ENCODE measurements at regions of chr2 and their contacts with region 1.

Region 1: GRCh38 chr2:189440947-189441708 is at the start of gene WDR75:
- DNase-seq: peak; percentile 73 to 96 (median 94)
- ATAC-seq: peak; percentile 97
- H3K4me3 ChIP-seq: peak within 1 kb of the TSS; percentile 83
- H3K4me3 Mint-ChIP-seq: peak within 1 kb of the TSS in 6 of 10 donors; percentile 99 to 100 (median 100)
- H3K27ac ChIP-seq: peak within 1 kb of the TSS; percentile 92
- H3K27ac Mint-ChIP-seq: peak within 1 kb of the TSS in 8 of 9 donors; percentile 97 to 100 (median 100)
- H3K4me1 ChIP-seq: peaks cover 10 to 14% of the 10 kb centered on the region in 2 donors
- H3K4me1 Mint-ChIP-seq: peaks cover 3 to 13% (median 8%) of the 10 kb centered on the region in 7 donors
- H3K27me3 ChIP-seq: no peaks in the 10 kb centered on the region
- H3K27me3 Mint-ChIP-seq: peaks cover 0 to 10% (median 0%) of the 10 kb centered on the region in 5 donors
- total RNA-seq, gene WDR75: 39.9 to 67.4 (median 60.7) TPM

Region 2: GRCh38 chr2:189109921-189110397 is 331.2 kb before region 1 on chr2:
- CTCF ChIA-PET with region 1: no interaction called
- POLR2A ChIA-PET with region 1: no interaction called
- intact Hi-C with region 1: no loop called
- DNase-seq: no peak
- ATAC-seq: no peak
- H3K4me3 ChIP-seq: no peak overlapping the region
- H3K4me3 Mint-ChIP-seq: no peak overlapping the region
- H3K27ac ChIP-seq: no peak overlapping the region
- H3K27ac Mint-ChIP-seq: no peak overlapping the region
- H3K4me1 ChIP-seq: no peaks in the 10 kb centered on the region
- H3K4me1 Mint-ChIP-seq: peaks cover 0 to 8% (median 5%) of the 10 kb centered on the region in 7 donors
- H3K27me3 ChIP-seq: no peaks in the 10 kb centered on the region
- H3K27me3 Mint-ChIP-seq: no peaks in the 10 kb centered on the region

Region 3: DNA sequence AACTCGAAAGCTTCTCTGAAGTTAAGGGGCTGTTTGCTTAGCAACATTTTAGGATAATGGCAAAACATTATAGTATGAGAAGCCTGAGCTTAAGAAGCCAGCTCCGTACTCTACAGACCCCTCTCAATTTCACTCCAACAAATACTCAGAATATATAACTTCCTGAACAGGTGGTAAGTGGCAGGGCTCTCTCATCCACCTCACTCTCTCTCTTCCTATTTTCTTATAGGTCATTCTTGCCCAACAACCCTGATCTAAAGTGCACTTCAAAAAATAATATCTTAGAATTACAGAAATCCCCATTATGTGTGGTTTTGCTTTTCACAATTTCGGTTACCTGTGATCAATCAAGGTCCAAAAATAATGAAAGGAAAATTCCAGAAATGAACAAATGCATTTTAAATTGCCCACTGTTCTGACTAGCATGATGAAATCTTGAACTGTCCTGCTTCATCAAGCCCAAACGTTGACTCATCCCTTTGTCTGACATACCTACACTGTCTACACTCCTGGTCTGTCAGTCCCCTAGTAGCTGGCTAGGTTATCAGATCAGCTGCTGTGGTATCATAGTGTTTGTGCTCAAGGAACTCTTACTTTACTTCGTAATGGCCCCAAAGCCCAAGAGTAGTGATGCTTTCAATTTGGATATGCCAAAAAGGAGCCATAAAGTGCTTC is 138.7 kb before region 1 on chr2:
- CTCF ChIA-PET with region 1: no interaction called
- POLR2A ChIA-PET with region 1: no interaction called
- intact Hi-C with region 1: loop called (anchors 1 to 2 kb)
- DNase-seq: no peak
- ATAC-seq: no peak
- H3K4me3 ChIP-seq: no peak overlapping the region
- H3K4me3 Mint-ChIP-seq: peak overlapping the region in 8 of 10 donors; percentile 4 to 74 (median 60)
- H3K27ac ChIP-seq: no peak overlapping the region
- H3K27ac Mint-ChIP-seq: peak overlapping the region in 8 of 9 donors; percentile 25 to 95 (median 70)
- H3K4me1 ChIP-seq: peaks cover 56 to 88% of the 10 kb centered on the region in 2 donors
- H3K4me1 Mint-ChIP-seq: peaks cover 57 to 96% (median 91%) of the 10 kb centered on the region in 7 donors
- H3K27me3 ChIP-seq: no peaks in the 10 kb centered on the region
- H3K27me3 Mint-ChIP-seq: no peaks in the 10 kb centered on the region

Region 4: GRCh38 chr2:189580658-189581353 is 139.7 kb after region 1 on chr2 and contains the start of gene SLC40A1:
- CTCF ChIA-PET with region 1: no interaction called
- POLR2A ChIA-PET with region 1: interaction called, 17 read pairs
- intact Hi-C with region 1: loop called (anchors 1 kb)
- DNase-seq: peak; percentile 54 to 75 (median 66)
- ATAC-seq: peak; percentile 96
- H3K4me3 ChIP-seq: peak within 1 kb of the TSS; percentile 79
- H3K4me3 Mint-ChIP-seq: peak within 1 kb of the TSS; percentile 83 to 100 (median 93)
- H3K27ac ChIP-seq: peak within 1 kb of the TSS; percentile 80
- H3K27ac Mint-ChIP-seq: peak within 1 kb of the TSS; percentile 30 to 98 (median 87)
- H3K4me1 ChIP-seq: peaks cover 0 to 12% of the 10 kb centered on the region in 2 donors
- H3K4me1 Mint-ChIP-seq: peaks cover 24 to 63% (median 56%) of the 10 kb centered on the region in 7 donors
- H3K27me3 ChIP-seq: peaks cover 0 to 5% of the 10 kb centered on the region in 2 donors
- H3K27me3 Mint-ChIP-seq: peaks cover 0 to 47% (median 0%) of the 10 kb centered on the region in 5 donors
- total RNA-seq, gene SLC40A1: 4.2 to 38.0 (median 24.4) TPM

Region 5: DNA sequence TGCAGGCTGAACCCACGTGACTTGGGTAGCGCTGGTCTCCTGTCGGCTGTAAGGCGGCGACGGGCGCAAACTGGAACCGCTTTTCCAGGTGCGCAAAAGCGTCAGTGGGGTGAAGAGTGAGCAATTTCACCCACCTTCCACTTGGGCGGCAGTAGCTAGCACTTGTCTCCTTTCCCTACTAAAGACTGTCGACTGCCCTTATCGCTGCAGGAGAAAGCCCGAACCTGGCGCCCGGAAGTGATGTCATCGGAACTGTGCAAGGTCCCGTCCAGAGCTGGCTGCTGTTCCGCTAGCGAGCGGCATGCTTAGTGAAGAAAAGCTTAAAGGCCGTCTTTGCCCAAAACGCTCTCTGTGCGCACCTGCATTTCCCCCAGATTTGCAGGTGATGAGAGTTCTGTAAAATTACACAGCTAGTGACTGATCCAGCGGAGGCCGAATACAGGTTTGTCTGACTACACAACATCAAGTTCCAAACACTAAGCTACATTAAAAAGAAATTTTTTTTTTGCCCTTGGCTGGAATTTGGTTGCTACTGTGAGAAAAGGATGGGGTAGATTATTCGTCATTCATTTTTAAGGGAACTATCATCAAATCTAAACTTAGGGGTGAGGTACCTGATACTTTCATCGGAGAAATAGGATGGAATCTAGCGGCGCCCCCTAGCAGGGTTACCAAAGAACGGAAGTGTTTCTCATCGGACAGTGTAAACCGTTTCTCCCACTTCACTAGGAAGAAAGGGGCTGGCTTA is 321.6 kb after region 1 on chr2 and contains the start of gene OSGEPL1:
- CTCF ChIA-PET with region 1: no interaction called
- POLR2A ChIA-PET with region 1: interaction called, 8 read pairs
- intact Hi-C with region 1: loop called (anchors 1 kb)
- DNase-seq: peak; percentile 72 to 95 (median 88)
- ATAC-seq: peak; percentile 95
- H3K4me3 ChIP-seq: peak within 1 kb of the TSS; percentile 88
- H3K4me3 Mint-ChIP-seq: peak within 1 kb of the TSS; percentile 88 to 98 (median 94)
- H3K27ac ChIP-seq: peak within 1 kb of the TSS; percentile 89
- H3K27ac Mint-ChIP-seq: peak within 1 kb of the TSS; percentile 94 to 98 (median 96)
- H3K4me1 ChIP-seq: peaks cover 6 to 10% of the 10 kb centered on the region in 2 donors
- H3K4me1 Mint-ChIP-seq: peaks cover 4 to 18% (median 9%) of the 10 kb centered on the region in 7 donors
- H3K27me3 ChIP-seq: no peaks in the 10 kb centered on the region
- H3K27me3 Mint-ChIP-seq: no peaks in the 10 kb centered on the region
- total RNA-seq, gene OSGEPL1: 6.8 to 24.2 (median 7.2) TPM

Region 6: GRCh38 chr2:190069936-190070696 is 629.0 kb after region 1 on chr2:
- CTCF ChIA-PET with region 1: no interaction called
- POLR2A ChIA-PET with region 1: no interaction called
- intact Hi-C with region 1: loop called in 1 of 2 experiments (anchors 10 kb)
- DNase-seq: peak in 6 of 9 donors; percentile 20 to 50 (median 32)
- ATAC-seq: peak; percentile 64
- H3K4me3 ChIP-seq: no peak overlapping the region
- H3K4me3 Mint-ChIP-seq: no peak overlapping the region
- H3K27ac ChIP-seq: no peak overlapping the region
- H3K27ac Mint-ChIP-seq: no peak overlapping the region
- H3K4me1 ChIP-seq: no peaks in the 10 kb centered on the region
- H3K4me1 Mint-ChIP-seq: no peaks in the 10 kb centered on the region
- H3K27me3 ChIP-seq: no peaks in the 10 kb centered on the region
- H3K27me3 Mint-ChIP-seq: peaks cover 0 to 8% (median 0%) of the 10 kb centered on the region in 5 donors

Region 7: DNA sequence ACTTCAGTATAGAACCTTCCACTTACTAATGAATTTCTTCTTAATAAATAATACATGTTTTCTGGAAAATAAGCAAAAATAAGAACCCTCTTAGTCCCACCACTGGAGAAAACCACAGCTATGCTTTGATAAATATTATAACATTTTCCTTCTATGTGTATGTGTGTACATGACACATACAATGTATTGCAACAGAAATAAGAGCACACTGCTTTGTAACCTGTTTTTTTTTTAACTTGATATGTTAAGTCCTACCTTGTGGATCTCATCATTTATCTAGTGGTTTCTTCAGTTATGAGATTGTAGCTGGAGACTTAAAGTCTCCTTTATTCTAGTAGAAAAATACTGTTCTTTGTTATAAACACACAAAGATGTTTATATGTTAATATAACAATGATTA is 919.4 kb after region 1 on chr2:
- CTCF ChIA-PET with region 1: no interaction called
- POLR2A ChIA-PET with region 1: no interaction called
- intact Hi-C with region 1: loop called in 1 of 2 experiments (anchors 5 kb)
- DNase-seq: no peak
- ATAC-seq: no peak
- H3K4me3 ChIP-seq: peak overlapping the region; percentile 61
- H3K4me3 Mint-ChIP-seq: peak overlapping the region; percentile 56 to 99 (median 92)
- H3K27ac ChIP-seq: peak overlapping the region; percentile 71
- H3K27ac Mint-ChIP-seq: peak overlapping the region; percentile 42 to 97 (median 94)
- H3K4me1 ChIP-seq: peaks cover 0 to 3% of the 10 kb centered on the region in 2 donors
- H3K4me1 Mint-ChIP-seq: peaks cover 10 to 39% (median 26%) of the 10 kb centered on the region in 7 donors
- H3K27me3 ChIP-seq: no peaks in the 10 kb centered on the region
- H3K27me3 Mint-ChIP-seq: no peaks in the 10 kb centered on the region

Measured in naive thymus-derived CD4-positive, alpha-beta T cell (primary cell).